ENCODE measurements at regions of chr7 and their contacts with region 1.

Region 1: DNA sequence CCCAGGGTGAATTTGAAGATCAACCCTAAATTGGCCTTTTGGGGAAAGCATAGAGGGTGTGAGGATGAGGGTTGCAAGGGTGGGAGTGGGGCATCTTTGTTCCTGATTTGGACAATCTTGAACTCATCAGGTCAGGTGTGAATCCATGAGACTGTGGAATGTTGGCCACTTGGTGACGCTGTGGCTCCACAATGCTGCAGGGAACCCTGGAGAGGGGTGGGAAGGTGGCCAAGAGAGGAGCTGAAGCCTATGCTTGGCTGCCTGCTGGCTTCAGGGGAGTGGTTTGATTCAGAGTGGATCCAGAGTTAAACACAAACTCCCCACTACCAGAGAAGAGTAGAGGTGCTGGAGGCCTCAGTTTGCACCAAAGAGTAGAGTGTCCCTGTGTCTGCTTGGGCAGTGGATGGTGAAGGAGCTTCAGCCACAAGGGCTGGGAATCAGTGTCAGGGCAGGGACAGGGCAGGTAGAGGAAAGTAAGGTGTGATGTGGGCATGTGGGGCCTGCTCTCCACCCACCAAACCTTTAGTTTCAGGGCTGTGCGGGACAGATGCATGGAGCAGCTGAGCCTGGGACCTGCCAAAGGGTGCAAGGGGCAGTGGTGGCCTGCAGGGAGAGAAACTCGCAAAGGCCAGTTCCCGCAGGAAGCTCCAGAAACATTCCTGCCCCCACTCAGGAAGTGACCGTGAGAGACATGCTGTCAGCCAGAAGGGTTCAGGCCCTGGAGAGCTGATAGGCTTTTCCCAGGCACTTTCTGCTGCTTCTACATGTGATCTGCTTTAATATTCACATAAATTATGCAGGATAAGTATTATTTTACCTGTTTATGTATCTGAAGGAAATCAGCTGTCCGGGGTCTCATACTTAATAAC is 81.0 kb upstream of the PRSS58 start:
- DNase-seq: peak; percentile 64
- H3K4me3 Mint-ChIP-seq: no peak overlapping the region
- H3K27ac Mint-ChIP-seq: peak overlapping the region; percentile 73
- H3K4me1 Mint-ChIP-seq: peaks cover 19% of the 10 kb centered on the region
- H3K27me3 Mint-ChIP-seq: peaks cover 2% of the 10 kb centered on the region

Region 2: GRCh38 chr7:142313528-142313927 is 25.3 kb before region 1 on chr7:
- CTCF ChIA-PET with region 1: interaction called, 3 read pairs
- intact Hi-C with region 1: loop called (anchors 1 kb)
- DNase-seq: peak; percentile 72
- H3K4me3 Mint-ChIP-seq: peak overlapping the region; percentile 55
- H3K27ac Mint-ChIP-seq: peak overlapping the region; percentile 63
- H3K4me1 Mint-ChIP-seq: peaks cover 13% of the 10 kb centered on the region
- H3K27me3 Mint-ChIP-seq: peaks cover 5% of the 10 kb centered on the region

Region 3: DNA sequence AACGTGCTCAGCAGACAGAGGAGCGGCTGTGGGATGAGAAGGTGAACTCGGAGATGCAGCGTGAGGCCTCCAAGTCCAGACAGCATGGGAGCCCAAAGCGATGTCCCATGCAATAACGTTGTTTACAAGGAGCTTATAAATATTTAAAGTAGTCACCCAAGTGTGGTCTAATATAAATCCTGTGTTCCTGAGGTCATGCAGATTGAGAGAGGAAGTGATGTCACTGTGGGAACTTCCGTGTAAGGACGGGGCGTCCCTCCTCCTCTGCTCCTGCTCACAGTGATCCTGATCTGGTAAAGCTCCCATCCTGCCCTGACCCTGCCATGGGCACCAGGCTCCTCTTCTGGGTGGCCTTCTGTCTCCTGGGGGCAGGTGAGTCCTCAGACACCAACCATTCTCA is 13.7 kb after region 1 on chr7:
- CTCF ChIA-PET with region 1: interaction called, 11 read pairs
- intact Hi-C with region 1: loop called (anchors 1 kb)
- DNase-seq: peak; percentile 52
- H3K4me3 Mint-ChIP-seq: peak overlapping the region; percentile 74
- H3K27ac Mint-ChIP-seq: peak overlapping the region; percentile 73
- H3K4me1 Mint-ChIP-seq: peaks cover 30% of the 10 kb centered on the region
- H3K27me3 Mint-ChIP-seq: no peaks in the 10 kb centered on the region